ENCODE measurements at regions of chr9 and their contacts with region 1.

Region 1: GRCh38 chr9:19379697-19380046 is 364 bp downstream of the RPS6 start:
- DNase-seq: no peak
- H3K4me3 Mint-ChIP-seq: peak overlapping the region; percentile 97
- H3K27ac Mint-ChIP-seq: peak overlapping the region; percentile 100
- H3K4me1 Mint-ChIP-seq: peaks cover 22% of the 10 kb centered on the region
- H3K27me3 Mint-ChIP-seq: no peaks in the 10 kb centered on the region
- CTCF ChIP-seq: no peak

Region 2: GRCh38 chr9:19184144-19184917 is 195.3 kb before region 1 on chr9:
- CTCF ChIA-PET with region 1: interaction called, 3 read pairs
- POLR2A ChIA-PET with region 1: interaction called, 6 read pairs
- intact Hi-C with region 1: loop called (anchors 10 kb)
- DNase-seq: peak; percentile 74
- H3K4me3 Mint-ChIP-seq: peak overlapping the region; percentile 38
- H3K27ac Mint-ChIP-seq: peak overlapping the region; percentile 98
- H3K4me1 Mint-ChIP-seq: peaks cover 13% of the 10 kb centered on the region
- H3K27me3 Mint-ChIP-seq: no peaks in the 10 kb centered on the region
- CTCF ChIP-seq: no peak

Region 3: GRCh38 chr9:19230356-19231125 is 149.1 kb before region 1 on chr9 and contains the start of gene DENND4C:
- CTCF ChIA-PET with region 1: interaction called, 3 read pairs
- POLR2A ChIA-PET with region 1: interaction called, 62 read pairs
- intact Hi-C with region 1: loop called (anchors 2 kb)
- DNase-seq: peak; percentile 91
- H3K4me3 Mint-ChIP-seq: no peak within 1 kb of the TSS
- H3K27ac Mint-ChIP-seq: no peak within 1 kb of the TSS
- H3K4me1 Mint-ChIP-seq: peaks cover 12% of the 10 kb centered on the region
- H3K27me3 Mint-ChIP-seq: no peaks in the 10 kb centered on the region
- CTCF ChIP-seq: no peak
- total RNA-seq, gene DENND4C: 26.4 and 36.4 TPM in 2 replicates

Region 4: GRCh38 chr9:19358701-19359100 is 21.0 kb before region 1 on chr9:
- CTCF ChIA-PET with region 1: interaction called, 3 read pairs
- POLR2A ChIA-PET with region 1: interaction called, 13 read pairs
- intact Hi-C with region 1: no loop called
- DNase-seq: no peak
- H3K4me3 Mint-ChIP-seq: no peak overlapping the region
- H3K27ac Mint-ChIP-seq: peak overlapping the region; percentile 7
- H3K4me1 Mint-ChIP-seq: no peaks in the 10 kb centered on the region
- H3K27me3 Mint-ChIP-seq: no peaks in the 10 kb centered on the region
- CTCF ChIP-seq: no peak

Region 5: GRCh38 chr9:19408693-19409400 is 29.2 kb after region 1 on chr9 and contains the start of gene ACER2:
- CTCF ChIA-PET with region 1: no interaction called
- POLR2A ChIA-PET with region 1: interaction called, 26 read pairs
- intact Hi-C with region 1: loop called (anchors 1 kb)
- DNase-seq: peak; percentile 91
- H3K4me3 Mint-ChIP-seq: peak within 1 kb of the TSS; percentile 98
- H3K27ac Mint-ChIP-seq: peak within 1 kb of the TSS; percentile 79
- H3K4me1 Mint-ChIP-seq: peaks cover 13% of the 10 kb centered on the region
- H3K27me3 Mint-ChIP-seq: no peaks in the 10 kb centered on the region
- CTCF ChIP-seq: no peak
- total RNA-seq, gene ACER2: 1.9 and 3.2 TPM in 2 replicates

Region 6: DNA sequence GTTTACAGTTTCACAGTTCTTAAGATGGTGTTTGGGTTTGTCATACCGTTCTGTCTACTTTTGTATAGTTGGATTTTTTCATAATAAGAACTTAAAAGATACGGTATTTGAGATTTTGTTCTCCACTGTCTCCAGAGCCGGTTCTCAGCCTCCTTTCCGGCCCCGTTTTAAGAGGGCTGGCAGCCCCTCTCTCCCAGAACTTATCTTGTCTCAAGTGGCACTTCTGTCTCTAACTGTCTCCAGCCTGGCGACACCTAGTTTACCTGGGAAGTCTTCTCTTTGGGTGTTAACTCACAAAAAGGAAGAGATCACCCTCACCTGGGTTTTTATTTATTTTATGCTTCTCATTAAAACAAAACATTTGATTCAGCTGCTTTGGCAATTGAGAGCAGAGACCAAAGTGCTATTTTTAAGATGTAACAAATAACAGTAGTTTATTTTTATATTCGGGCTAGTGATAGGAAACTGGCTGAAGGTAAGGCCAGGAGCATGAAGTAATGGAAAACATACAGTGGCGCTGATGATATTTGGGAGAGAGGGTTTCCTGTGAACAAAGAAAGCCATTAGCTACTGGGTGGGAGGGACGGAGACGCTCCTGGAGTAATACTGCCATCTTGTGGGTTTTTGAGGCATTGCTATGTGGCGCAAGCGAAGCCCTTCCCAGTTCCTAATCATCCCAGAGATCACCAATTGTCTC is 77.5 kb after region 1 on chr9:
- CTCF ChIA-PET with region 1: interaction called, 7 read pairs
- POLR2A ChIA-PET with region 1: interaction called, 7 read pairs
- intact Hi-C with region 1: loop called (anchors 1 kb)
- DNase-seq: peak; percentile 80
- H3K4me3 Mint-ChIP-seq: peak overlapping the region; percentile 33
- H3K27ac Mint-ChIP-seq: no peak overlapping the region
- H3K4me1 Mint-ChIP-seq: no peaks in the 10 kb centered on the region
- H3K27me3 Mint-ChIP-seq: no peaks in the 10 kb centered on the region
- CTCF ChIP-seq: peak; percentile 91